ENCODE measurements at regions of chr11 and their contacts with region 1.

Region 1: DNA sequence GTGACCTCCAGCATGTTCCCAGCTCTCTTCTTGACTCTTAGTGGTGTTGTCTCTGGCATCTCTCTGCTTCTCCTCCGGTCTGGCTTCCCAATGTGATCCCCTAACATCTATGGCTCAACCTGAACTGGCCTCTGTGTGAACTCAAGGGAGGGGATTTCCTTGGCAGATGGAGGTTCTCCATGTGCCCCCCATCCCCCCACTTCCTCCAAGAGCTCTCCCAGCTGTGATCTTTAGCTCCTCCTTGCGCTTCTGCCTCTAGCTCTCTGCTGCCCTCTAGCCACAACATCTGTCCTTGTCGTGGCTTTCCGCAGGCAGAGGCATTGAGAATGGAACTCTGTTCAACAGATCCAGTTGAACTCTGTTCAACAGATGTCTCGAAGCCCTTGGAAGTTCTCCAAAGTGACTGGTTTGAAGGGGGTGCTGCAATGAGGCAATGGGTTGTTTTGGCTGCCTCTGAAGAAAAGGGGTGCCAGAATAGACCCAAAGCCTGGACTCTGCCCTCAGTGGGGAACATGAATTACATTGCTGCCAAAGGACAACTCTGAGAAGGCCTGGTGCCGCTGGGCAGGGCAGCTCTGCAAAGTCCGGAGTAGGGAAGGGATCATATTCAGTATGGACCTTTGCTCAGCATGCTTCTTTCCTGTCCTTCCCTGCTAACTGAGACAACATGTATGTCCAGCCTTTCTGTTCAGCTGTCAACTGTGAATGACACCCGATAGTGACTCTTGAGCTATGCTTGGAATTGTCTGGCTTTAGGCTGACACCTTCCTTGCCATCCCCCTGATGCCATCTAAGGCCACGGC is 61.9 kb downstream of the ADM start:
- DNase-seq: peak; percentile 87 to 90
- H3K4me3 ChIP-seq: no peak overlapping the region
- H3K27ac ChIP-seq: peak overlapping the region; percentile 4; the same call in 1 of the 2 replicates
- H3K4me1 ChIP-seq: peaks cover 0 to 10% (median 1%) of the 10 kb centered on the region in 4 experiments; a peak in 3 of 7 replicates
- H3K27me3 ChIP-seq: no peaks in the 10 kb centered on the region
- CTCF ChIP-seq: peak; percentile 87 to 99 (median 87)
- EP300 ChIP-seq: peak in 1 of 2 experiments; percentile 60; a peak in 1 of 3 replicates
- POLR2A ChIP-seq: no peak
- RAD21 ChIP-seq: peak; percentile 95 to 98

Region 2: GRCh38 chr11:10314199-10315072 is 52.3 kb before region 1 on chr11:
- CTCF ChIA-PET with region 1: interaction called, 97 read pairs
- POLR2A ChIA-PET with region 1: interaction called, 3 read pairs
- DNase-seq: no peak
- H3K4me3 ChIP-seq: no peak overlapping the region
- H3K27ac ChIP-seq: no peak overlapping the region
- H3K4me1 ChIP-seq: peaks cover 2 to 16% (median 8%) of the 10 kb centered on the region in 4 experiments
- H3K27me3 ChIP-seq: no peaks in the 10 kb centered on the region
- CTCF ChIP-seq: no peak
- EP300 ChIP-seq: no peak
- POLR2A ChIP-seq: no peak
- RAD21 ChIP-seq: no peak

Region 3: GRCh38 chr11:10322830-10323792 is 43.7 kb before region 1 on chr11:
- CTCF ChIA-PET with region 1: interaction called, 20 read pairs
- POLR2A ChIA-PET with region 1: no interaction called
- DNase-seq: no peak
- H3K4me3 ChIP-seq: no peak overlapping the region
- H3K27ac ChIP-seq: no peak overlapping the region
- H3K4me1 ChIP-seq: peaks cover 6 to 15% (median 11%) of the 10 kb centered on the region in 4 experiments; a peak in 6 of 7 replicates
- H3K27me3 ChIP-seq: no peaks in the 10 kb centered on the region
- CTCF ChIP-seq: peak in 2 of 3 experiments; percentile 23 to 24; a peak in 2 of 4 replicates
- EP300 ChIP-seq: no peak
- POLR2A ChIP-seq: no peak
- RAD21 ChIP-seq: peak; percentile 50 to 59

Region 4: GRCh38 chr11:10351768-10352641 is 14.8 kb before region 1 on chr11:
- CTCF ChIA-PET with region 1: interaction called, 53 read pairs
- POLR2A ChIA-PET with region 1: interaction called, 23 read pairs
- DNase-seq: peak; percentile 85 to 98
- H3K4me3 ChIP-seq: peak overlapping the region in 2 of 4 experiments; percentile 3 to 35; a peak in 1 of 8 replicates
- H3K27ac ChIP-seq: peak overlapping the region; percentile 95
- H3K4me1 ChIP-seq: peaks cover 5 to 25% (median 16%) of the 10 kb centered on the region in 4 experiments; a peak in 6 of 7 replicates
- H3K27me3 ChIP-seq: no peaks in the 10 kb centered on the region; a peak in 1 of 7 replicates
- CTCF ChIP-seq: no peak
- EP300 ChIP-seq: peak; percentile 17 to 93
- POLR2A ChIP-seq: peak; percentile 55 to 70
- RAD21 ChIP-seq: peak in 1 of 2 experiments; percentile 17; a peak in 1 of 4 replicates

Region 5: DNA sequence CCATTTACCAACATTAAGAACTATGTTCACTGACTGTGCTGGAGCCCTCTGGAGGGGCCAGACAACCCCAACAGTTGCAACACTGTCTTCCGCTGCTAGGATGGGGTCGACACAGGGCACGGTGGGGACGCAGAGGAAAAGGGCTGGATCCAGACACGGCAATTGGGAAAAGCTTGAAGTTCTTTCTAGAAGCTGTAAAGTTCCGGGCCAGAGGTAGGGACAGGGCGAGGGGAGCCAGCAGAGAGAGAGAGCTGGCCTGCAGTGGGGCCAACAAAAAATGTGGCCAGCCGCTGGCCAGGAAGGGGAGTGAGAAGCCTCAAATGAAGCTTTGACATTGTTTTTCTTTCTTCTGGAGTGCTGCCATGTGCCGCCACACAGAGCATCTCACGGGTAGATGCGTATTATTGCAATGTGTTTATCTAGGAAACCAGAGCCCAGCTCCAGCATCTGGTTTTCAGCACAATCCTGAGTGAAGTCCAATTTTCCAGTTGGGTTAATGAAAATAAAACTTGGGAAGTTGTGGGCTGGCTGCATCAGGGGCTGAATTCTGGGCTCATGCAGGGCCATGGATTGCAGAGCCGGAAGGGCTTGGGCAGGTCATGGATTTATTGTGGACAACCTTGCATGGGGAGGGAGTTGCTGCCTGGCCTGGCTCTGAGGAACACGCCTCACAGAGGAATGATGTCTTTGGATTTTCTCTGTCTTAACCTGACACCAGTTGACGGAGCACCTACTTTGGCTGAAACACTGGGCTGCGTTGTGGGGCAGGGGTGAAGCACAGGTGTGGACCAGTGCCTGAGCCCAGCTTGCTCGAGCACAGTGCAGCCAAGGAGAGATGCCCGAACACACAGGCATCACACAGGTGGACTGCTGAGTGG is 20.7 kb after region 1 on chr11:
- CTCF ChIA-PET with region 1: interaction called, 30 read pairs
- POLR2A ChIA-PET with region 1: no interaction called
- DNase-seq: peak in 1 of 2 experiments; percentile 34
- H3K4me3 ChIP-seq: no peak overlapping the region
- H3K27ac ChIP-seq: no peak overlapping the region
- H3K4me1 ChIP-seq: peaks cover 0 to 4% (median 0%) of the 10 kb centered on the region in 4 experiments; a peak in 2 of 7 replicates
- H3K27me3 ChIP-seq: no peaks in the 10 kb centered on the region
- CTCF ChIP-seq: no peak
- EP300 ChIP-seq: no peak
- POLR2A ChIP-seq: no peak
- RAD21 ChIP-seq: no peak

Region 6: GRCh38 chr11:10400856-10401255 is 34.1 kb after region 1 on chr11:
- CTCF ChIA-PET with region 1: interaction called, 17 read pairs
- POLR2A ChIA-PET with region 1: no interaction called
- DNase-seq: no peak
- H3K4me3 ChIP-seq: no peak overlapping the region
- H3K27ac ChIP-seq: no peak overlapping the region
- H3K4me1 ChIP-seq: no peaks in the 10 kb centered on the region
- H3K27me3 ChIP-seq: no peaks in the 10 kb centered on the region; a peak in 1 of 7 replicates
- CTCF ChIP-seq: no peak
- EP300 ChIP-seq: no peak
- POLR2A ChIP-seq: no peak
- RAD21 ChIP-seq: no peak

Measured in H1 (cell line).